Natural killer cell (primary cell): ENCODE measurements at regions of chr15 and their contacts with region 1.

Region 1: GRCh38 chr15:40506964-40507571 is 36.3 kb downstream of the CHST14 start:
- DNase-seq: peak; percentile 44 to 74
- ATAC-seq: peak; percentile 67 to 83 (median 75)
- H3K4me3 ChIP-seq: no peak overlapping the region
- H3K4me3 Mint-ChIP-seq: peak overlapping the region; percentile 0
- H3K27ac ChIP-seq: no peak overlapping the region
- H3K27ac Mint-ChIP-seq: no peak overlapping the region
- H3K4me1 ChIP-seq: peaks cover 19% of the 10 kb centered on the region
- H3K4me1 Mint-ChIP-seq: peaks cover 24 to 25% of the 10 kb centered on the region in 2 donors
- H3K27me3 ChIP-seq: peaks cover 25% of the 10 kb centered on the region
- H3K27me3 Mint-ChIP-seq: peaks cover 34 to 47% of the 10 kb centered on the region in 2 donors
- CTCF ChIP-seq: peak; percentile 51

Region 2: GRCh38 chr15:40440743-40441564 is 66.1 kb before region 1 on chr15 and contains the start of gene BAHD1:
- intact Hi-C with region 1: loop called (anchors 5 kb)
- DNase-seq: peak; percentile 91 to 94
- ATAC-seq: peak; percentile 83 to 92 (median 89)
- H3K4me3 ChIP-seq: peak within 1 kb of the TSS; percentile 62
- H3K4me3 Mint-ChIP-seq: peak within 1 kb of the TSS; percentile 95
- H3K27ac ChIP-seq: no peak within 1 kb of the TSS
- H3K27ac Mint-ChIP-seq: peak within 1 kb of the TSS; percentile 70 to 84
- H3K4me1 ChIP-seq: peaks cover 42% of the 10 kb centered on the region
- H3K4me1 Mint-ChIP-seq: peaks cover 46 to 77% of the 10 kb centered on the region in 2 donors
- H3K27me3 ChIP-seq: peaks cover 21% of the 10 kb centered on the region
- H3K27me3 Mint-ChIP-seq: peaks cover 13 to 19% of the 10 kb centered on the region in 2 donors
- CTCF ChIP-seq: no peak
- total RNA-seq, gene BAHD1: 29.4 to 48.9 (median 41.8) TPM